ENCODE measurements at regions of chr1 and their contacts with region 1.

Region 1: GRCh38 chr1:119948342-119949214 is 52.3 kb upstream of the ADAM30 start:
- DNase-seq: no peak
- H3K4me3 ChIP-seq: no peak overlapping the region
- CTCF ChIP-seq: peak; percentile 88

Region 2: GRCh38 chr1:119531624-119532323 is 416.8 kb before region 1 on chr1:
- CTCF ChIA-PET with region 1: no interaction called
- POLR2A ChIA-PET with region 1: no interaction called
- DNase-seq: peak; percentile 12
- H3K4me3 ChIP-seq: no peak overlapping the region
- CTCF ChIP-seq: no peak

Region 3: GRCh38 chr1:119700326-119700725 is 248.3 kb before region 1 on chr1:
- CTCF ChIA-PET with region 1: no interaction called
- POLR2A ChIA-PET with region 1: no interaction called
- DNase-seq: no peak
- H3K4me3 ChIP-seq: no peak overlapping the region
- CTCF ChIP-seq: no peak

Region 4: DNA sequence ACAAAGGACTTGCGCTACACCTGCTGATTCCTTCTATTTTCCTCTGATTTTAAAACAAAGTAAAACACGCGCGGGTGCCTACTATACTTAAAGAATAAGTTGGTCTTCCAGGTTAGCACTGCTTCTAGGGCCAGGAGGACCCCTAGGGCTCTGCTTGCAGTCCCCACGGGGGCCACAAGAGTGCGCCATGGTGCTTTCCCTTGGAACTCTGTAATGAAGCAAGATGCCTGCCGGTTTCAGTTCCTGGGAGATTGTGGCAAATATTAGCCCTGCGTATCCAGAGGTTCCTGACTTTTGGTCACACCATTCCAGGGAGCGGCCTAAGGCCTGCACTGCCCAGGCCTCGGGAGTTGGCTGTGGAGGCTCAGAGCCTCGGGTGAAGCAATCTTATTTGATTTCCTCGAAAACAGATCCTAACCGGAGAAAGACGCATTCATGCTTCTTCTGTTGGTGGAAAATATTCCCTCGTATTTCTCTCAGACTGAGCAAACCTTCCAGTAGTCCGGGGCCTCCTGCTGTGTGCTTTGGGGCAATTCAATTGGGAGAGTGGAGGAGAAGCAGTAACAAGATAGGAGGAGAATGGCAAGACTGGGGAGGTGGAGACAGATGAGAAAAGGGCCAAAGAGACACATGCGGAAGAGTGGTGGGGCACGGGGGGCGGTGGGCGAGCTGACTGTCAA is 77.5 kb before region 1 on chr1:
- CTCF ChIA-PET with region 1: interaction called, 18 read pairs
- POLR2A ChIA-PET with region 1: no interaction called
- DNase-seq: no peak
- H3K4me3 ChIP-seq: no peak overlapping the region
- CTCF ChIP-seq: peak; percentile 97

Region 5: DNA sequence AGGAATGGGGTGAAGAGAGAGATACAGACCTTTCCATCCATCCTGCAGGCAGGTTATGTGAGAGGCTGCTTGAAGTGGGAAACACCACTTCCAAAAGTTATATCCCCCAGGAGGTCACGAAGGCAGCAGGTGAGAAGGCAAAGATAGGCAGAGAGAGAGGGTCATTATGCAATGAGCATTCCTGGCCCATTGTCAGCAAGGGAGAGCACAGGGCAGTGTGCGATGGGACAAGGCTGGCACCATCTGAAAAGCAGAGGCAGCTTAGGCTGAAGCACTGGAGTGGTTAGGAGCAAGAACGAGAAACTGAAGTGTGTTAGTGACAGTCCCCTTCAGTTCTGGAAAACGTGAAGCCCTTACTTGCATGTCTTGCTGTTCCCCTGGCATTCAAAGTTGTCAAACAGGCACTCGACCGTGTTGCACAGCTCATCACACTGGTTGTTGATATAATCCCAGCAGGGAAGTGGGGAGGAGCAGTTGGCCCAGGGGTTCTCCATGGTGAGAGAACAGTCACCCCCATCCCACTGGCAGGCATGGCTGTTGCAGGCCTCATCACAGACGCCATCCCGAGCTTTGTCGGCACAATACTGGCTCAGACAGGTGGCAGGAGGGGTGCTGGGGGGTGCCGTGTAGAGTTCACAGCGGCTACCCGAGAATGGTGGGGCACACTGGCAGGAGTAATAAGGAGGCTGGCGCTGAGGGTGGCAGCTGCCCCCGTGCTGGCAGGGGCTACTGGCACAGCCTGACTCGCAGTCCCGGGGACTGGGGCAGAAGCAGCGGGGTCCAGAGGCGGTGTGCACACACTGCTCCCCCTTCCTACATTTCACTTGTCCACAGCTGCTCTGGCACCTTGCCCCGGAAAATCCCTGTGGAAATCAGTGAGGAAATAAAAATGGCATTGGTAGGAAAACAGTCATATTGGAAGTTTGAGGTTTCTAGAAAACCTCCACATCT is 23.4 kb before region 1 on chr1:
- CTCF ChIA-PET with region 1: interaction called, 17 read pairs
- POLR2A ChIA-PET with region 1: no interaction called
- DNase-seq: no peak
- H3K4me3 ChIP-seq: no peak overlapping the region
- CTCF ChIP-seq: no peak

Region 6: DNA sequence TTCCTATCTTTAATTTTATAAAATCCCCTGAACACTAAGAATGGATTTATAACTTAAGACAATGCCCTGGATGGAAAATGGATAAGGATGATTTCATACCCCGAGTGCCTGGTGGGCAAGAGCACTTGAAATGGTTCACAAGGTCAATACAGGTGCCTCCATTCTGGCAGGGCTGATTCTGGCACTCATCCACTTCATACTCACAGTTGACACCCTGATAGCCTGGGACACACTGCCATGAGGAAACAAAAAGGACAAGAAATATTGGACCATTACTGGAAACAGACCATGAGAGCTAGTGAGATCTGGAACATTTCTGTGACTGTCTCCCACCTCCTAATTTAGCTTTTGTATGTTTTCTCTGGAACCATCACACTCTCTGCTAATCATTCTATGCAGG is 13.2 kb before region 1 on chr1:
- CTCF ChIA-PET with region 1: interaction called, 25 read pairs
- POLR2A ChIA-PET with region 1: no interaction called
- DNase-seq: no peak
- H3K4me3 ChIP-seq: no peak overlapping the region
- CTCF ChIP-seq: no peak

Region 7: DNA sequence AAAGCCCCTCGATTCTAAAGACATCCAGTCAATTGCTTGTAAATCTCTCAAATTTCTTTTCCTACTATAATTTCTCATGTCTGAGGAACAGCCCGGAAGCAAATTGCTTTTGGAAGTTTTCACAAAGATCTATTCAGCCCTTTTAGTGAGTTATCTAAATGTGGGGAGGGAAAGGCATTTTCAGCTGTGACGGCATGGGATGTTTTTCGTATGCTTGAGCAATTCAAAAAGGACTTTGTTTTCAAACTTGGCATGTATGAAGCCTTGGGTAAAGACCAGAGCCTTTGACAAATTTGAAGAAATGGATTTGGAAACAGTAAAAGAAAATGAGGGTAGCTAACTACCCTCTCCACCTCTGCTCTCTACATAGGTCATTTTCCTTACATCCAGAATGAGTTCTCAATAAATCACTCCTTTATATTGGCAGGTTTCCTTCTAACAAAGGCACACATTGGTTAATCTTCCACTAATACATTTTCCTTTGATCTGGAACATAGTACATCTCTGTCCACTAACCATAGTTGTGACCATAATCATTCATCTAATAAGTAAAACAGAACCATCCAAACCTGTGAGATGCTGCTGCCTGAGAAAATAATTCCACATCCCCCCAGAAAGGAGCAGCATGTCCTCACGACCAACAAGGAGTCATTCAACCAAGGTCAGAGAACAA is 13.9 kb after region 1 on chr1:
- CTCF ChIA-PET with region 1: interaction called, 67 read pairs
- POLR2A ChIA-PET with region 1: no interaction called
- DNase-seq: no peak
- H3K4me3 ChIP-seq: no peak overlapping the region
- CTCF ChIP-seq: no peak

Region 8: DNA sequence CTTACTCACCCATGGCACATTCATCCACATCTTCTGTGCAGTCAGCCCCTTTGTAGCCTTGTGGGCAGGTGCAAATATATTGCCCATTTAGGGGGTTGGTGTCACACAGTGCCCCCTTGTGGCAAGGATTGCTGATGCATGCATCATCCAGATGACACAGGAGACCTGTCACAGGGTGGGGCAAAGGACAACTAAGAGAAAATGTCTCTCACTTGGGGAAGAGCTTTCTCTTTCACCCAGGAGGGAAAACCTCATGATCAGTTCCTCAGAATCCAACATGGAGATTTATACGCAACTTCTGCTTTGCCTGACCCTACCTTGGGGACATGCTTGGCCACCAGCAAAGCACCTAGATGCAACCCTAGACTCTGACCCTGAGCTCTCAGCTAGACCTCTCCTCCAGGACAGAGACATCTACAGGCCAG is 19.5 kb after region 1 on chr1:
- CTCF ChIA-PET with region 1: interaction called, 67 read pairs
- POLR2A ChIA-PET with region 1: no interaction called
- DNase-seq: no peak
- H3K4me3 ChIP-seq: no peak overlapping the region
- CTCF ChIP-seq: peak; percentile 64

Region 9: DNA sequence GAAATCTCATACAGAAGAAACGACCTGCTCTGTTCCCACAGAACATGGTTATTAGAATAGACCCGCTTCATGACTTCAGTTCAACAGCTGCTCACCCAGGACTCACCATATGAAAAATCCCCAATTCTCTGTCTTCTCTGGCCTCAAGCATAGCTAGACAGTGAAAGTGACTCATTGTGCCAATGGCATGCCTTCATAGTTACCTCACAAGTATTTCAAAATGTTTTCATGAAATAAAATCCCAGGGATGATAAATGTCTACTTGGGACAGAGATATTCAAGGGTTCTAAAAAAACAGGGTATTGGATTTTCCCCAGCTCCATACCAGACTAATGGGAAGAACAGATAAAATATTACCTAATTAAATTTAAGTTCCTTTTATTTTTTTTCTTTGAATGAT is 38.5 kb after region 1 on chr1:
- CTCF ChIA-PET with region 1: interaction called, 12 read pairs
- POLR2A ChIA-PET with region 1: no interaction called
- DNase-seq: peak; percentile 90
- H3K4me3 ChIP-seq: no peak overlapping the region
- CTCF ChIP-seq: no peak

Measured in AG04449 (cell line).